ENCODE measurements at regions of chrX and their contacts with region 1.

Region 1: DNA sequence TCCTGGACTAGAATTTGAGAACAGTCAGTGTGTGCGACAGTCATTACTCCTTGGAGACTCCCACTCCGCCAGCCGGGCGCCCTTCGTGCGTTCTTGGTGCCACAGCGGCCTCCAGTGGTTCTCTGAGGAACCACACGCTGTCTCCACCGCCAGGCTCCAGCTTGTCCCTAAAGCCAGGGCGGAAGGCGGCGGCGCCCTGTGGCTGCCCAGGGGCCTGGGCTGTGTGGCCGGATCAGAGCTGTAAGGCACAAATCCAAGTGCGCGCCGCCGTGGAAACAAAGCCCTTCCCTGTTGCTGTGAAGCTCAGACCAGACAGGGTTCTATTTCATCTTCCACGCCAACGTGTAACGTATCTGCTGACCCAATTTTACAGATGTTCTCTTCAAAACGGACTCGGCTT is 34.2 kb downstream of the IDS start:
- DNase-seq: peak; percentile 82
- H3K4me3 ChIP-seq: no peak overlapping the region
- H3K27ac ChIP-seq: no peak overlapping the region
- H3K4me1 ChIP-seq: no peaks in the 10 kb centered on the region
- H3K27me3 ChIP-seq: peaks cover 3% of the 10 kb centered on the region
- CTCF ChIP-seq: peak; percentile 92

Region 2: DNA sequence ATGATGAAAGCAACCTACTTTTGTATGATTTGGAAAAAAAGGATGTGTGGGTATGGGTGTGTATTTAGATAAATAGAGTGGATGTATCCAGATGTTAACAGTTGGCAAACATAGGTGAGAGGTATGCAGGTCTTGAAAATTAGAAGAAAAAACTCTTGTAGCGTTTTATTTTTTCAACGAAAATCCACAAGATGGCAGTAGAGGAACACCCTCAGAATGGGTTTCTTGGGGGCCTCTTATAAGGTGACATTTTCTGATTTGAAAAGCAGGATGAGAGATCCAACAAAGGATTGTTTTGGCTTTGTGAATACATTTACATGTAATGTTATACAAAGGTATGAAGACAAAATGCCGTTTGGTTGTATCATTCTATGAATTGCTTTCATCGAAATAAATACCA is 1421.5 kb before region 1 on chrX:
- CTCF ChIA-PET with region 1: no interaction called
- POLR2A ChIA-PET with region 1: no interaction called
- intact Hi-C with region 1: loop called (anchors 1 kb)
- DNase-seq: peak; percentile 60
- H3K4me3 ChIP-seq: no peak overlapping the region
- H3K27ac ChIP-seq: no peak overlapping the region
- H3K4me1 ChIP-seq: no peaks in the 10 kb centered on the region
- H3K27me3 ChIP-seq: no peaks in the 10 kb centered on the region
- CTCF ChIP-seq: peak; percentile 66

Measured in A673 (cell line).